A673 (cell line): ENCODE measurements at regions of chr4 and their contacts with region 1.

Region 1: DNA sequence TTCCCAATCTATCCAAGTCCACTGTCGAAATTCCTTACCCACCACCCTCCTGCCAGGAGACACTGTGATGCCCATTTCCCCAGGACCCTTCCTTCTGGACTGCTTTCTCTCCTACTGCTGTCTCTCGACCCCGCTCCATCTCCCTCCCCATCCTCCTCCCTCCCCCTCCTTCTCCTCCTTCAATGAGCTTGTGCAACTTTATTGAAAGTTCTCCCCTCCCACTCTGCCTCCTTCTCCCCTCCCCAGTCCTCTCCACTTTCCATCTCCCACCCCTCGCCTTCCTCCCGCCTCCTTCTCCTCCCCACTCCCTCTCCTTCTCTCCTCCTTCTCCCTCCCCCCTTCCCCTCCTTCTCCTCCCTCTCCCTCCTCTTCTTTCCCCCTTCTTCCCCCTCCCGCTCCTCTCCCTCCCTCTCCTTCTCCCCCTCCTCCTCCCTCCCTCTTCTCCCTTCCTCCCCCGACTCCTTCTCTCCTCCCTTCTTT is 116.6 kb upstream of the FAT1 start:
- DNase-seq: no peak
- H3K4me3 ChIP-seq: no peak overlapping the region
- H3K27ac ChIP-seq: no peak overlapping the region
- H3K4me1 ChIP-seq: peaks cover 10% of the 10 kb centered on the region
- H3K27me3 ChIP-seq: no peaks in the 10 kb centered on the region
- CTCF ChIP-seq: no peak

Region 2: GRCh38 chr4:186829097-186829496 is 11.2 kb before region 1 on chr4:
- CTCF ChIA-PET with region 1: no interaction called
- POLR2A ChIA-PET with region 1: interaction called, 13 read pairs
- intact Hi-C with region 1: no loop called
- DNase-seq: no peak
- H3K4me3 ChIP-seq: no peak overlapping the region
- H3K27ac ChIP-seq: no peak overlapping the region
- H3K4me1 ChIP-seq: no peaks in the 10 kb centered on the region
- H3K27me3 ChIP-seq: no peaks in the 10 kb centered on the region
- CTCF ChIP-seq: no peak

Region 3: GRCh38 chr4:187065396-187065795 is 225.1 kb after region 1 on chr4:
- CTCF ChIA-PET with region 1: no interaction called
- POLR2A ChIA-PET with region 1: no interaction called
- intact Hi-C with region 1: no loop called
- DNase-seq: no peak
- H3K4me3 ChIP-seq: no peak overlapping the region
- H3K27ac ChIP-seq: no peak overlapping the region
- H3K4me1 ChIP-seq: no peaks in the 10 kb centered on the region
- H3K27me3 ChIP-seq: peaks cover 77% of the 10 kb centered on the region
- CTCF ChIP-seq: no peak